GM13976 (cell line): ENCODE measurements at regions of chr19 and their contacts with region 1.

Region 1: GRCh38 chr19:44954824-44955586 is at the start of gene CLPTM1:
- DNase-seq: peak; percentile 98
- CTCF ChIP-seq: no peak

Region 2: DNA sequence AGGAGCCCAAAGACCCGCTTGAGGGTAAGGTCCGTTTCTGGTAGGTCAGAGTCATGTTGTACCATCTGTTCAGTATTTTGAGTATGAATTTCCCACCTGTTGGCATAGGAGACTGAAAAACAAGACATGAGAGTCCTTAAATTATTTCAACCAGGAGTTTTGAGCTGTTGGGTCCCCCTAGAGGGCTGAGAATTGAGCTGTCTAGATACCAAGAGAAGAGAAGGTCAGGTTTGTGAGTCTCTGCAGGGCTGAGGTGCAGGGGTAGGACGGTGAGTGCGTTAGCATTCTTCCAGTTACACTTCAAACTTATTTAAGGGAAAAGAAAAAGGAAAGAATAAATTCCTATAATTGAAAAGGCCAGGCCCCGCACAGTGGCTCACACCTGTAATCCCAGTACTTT is 172.3 kb before region 1 on chr19:
- in situ Hi-C with region 1: loop called (anchors 10 kb)
- DNase-seq: no peak
- CTCF ChIP-seq: no peak

Region 3: DNA sequence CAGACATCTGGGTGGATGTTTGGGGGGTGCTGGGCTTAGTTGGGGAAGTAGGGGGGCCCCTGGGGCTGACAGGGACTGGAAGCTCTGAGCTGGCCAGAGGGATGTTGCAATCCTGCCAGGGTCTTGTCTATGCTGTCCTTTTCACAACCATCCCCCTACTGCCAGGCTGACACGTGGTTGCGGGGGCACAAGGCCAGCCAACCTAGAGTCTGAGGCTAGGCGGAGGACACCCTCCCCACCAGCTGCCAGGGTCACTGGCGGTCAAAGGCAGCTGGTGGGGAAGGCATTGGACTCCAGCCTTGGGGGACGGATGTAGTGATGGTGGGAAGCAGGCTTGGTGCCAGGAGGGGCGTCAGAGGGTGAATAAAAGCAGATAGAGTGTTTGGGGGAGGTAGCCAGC is 42.2 kb before region 1 on chr19:
- in situ Hi-C with region 1: no loop called
- DNase-seq: no peak
- CTCF ChIP-seq: no peak